ENCODE measurements at regions of chr3 and their contacts with region 1.

Region 1: GRCh38 chr3:138923531-138923994 is 23.4 kb downstream of the FOXL2 start:
- DNase-seq: peak; percentile 74 to 85 (median 74)
- ATAC-seq: peak in 3 of 4 donors; percentile 84 to 88 (median 87)
- H3K4me3 ChIP-seq: no peak overlapping the region
- H3K27ac ChIP-seq: no peak overlapping the region
- H3K4me1 ChIP-seq: peaks cover 0 to 3% (median 0%) of the 10 kb centered on the region in 12 donors
- H3K27me3 ChIP-seq: no peaks in the 10 kb centered on the region
- CTCF ChIP-seq: peak; percentile 83 to 93 (median 88)
- POLR2A ChIP-seq: no peak

Region 2: GRCh38 chr3:138694287-138695007 is 229.1 kb before region 1 on chr3:
- intact Hi-C with region 1: loop called in 3 of 10 experiments (anchors 2 to 5 kb)
- DNase-seq: no peak
- ATAC-seq: no peak
- H3K4me3 ChIP-seq: no peak overlapping the region
- H3K27ac ChIP-seq: no peak overlapping the region
- H3K4me1 ChIP-seq: peaks cover 0 to 6% (median 0%) of the 10 kb centered on the region in 12 donors
- H3K27me3 ChIP-seq: no peaks in the 10 kb centered on the region
- CTCF ChIP-seq: no peak
- POLR2A ChIP-seq: no peak

Region 3: DNA sequence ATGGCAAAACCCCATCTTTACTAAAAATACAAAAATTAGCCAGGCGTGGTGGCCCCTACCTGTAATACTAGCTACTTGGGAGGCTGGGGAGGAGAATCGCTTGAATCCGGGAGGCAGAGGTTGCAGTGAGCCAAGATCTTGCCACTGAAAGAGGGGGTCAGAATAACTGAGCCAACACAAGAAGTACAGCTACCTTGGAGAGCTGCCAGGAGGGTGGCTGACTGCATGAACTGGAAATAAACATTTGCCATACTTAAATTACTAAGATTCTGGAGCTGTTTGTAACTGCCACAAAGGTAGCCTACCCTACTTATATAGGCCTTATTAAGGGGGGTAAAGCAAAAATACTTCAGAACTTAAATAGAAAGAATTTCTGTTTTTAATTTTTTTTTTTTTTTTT is 73.4 kb before region 1 on chr3:
- intact Hi-C with region 1: no loop called
- DNase-seq: peak in 4 of 5 donors; percentile 35 to 66 (median 42)
- ATAC-seq: no peak
- H3K4me3 ChIP-seq: no peak overlapping the region
- H3K27ac ChIP-seq: no peak overlapping the region
- H3K4me1 ChIP-seq: peaks cover 0 to 19% (median 0%) of the 10 kb centered on the region in 12 donors
- H3K27me3 ChIP-seq: no peaks in the 10 kb centered on the region
- CTCF ChIP-seq: no peak
- POLR2A ChIP-seq: no peak

Measured in heart left ventricle (tissue), 16 donors.